ENCODE measurements at regions of chr1 and their contacts with region 1.

Region 1: GRCh38 chr1:15430787-15431570 is 7.3 kb upstream of the CTRC start:
- DNase-seq: peak; percentile 74
- H3K4me3 Mint-ChIP-seq: no peak overlapping the region
- H3K27ac Mint-ChIP-seq: no peak overlapping the region
- H3K4me1 Mint-ChIP-seq: peaks cover 8% of the 10 kb centered on the region
- H3K27me3 Mint-ChIP-seq: no peaks in the 10 kb centered on the region

Region 2: DNA sequence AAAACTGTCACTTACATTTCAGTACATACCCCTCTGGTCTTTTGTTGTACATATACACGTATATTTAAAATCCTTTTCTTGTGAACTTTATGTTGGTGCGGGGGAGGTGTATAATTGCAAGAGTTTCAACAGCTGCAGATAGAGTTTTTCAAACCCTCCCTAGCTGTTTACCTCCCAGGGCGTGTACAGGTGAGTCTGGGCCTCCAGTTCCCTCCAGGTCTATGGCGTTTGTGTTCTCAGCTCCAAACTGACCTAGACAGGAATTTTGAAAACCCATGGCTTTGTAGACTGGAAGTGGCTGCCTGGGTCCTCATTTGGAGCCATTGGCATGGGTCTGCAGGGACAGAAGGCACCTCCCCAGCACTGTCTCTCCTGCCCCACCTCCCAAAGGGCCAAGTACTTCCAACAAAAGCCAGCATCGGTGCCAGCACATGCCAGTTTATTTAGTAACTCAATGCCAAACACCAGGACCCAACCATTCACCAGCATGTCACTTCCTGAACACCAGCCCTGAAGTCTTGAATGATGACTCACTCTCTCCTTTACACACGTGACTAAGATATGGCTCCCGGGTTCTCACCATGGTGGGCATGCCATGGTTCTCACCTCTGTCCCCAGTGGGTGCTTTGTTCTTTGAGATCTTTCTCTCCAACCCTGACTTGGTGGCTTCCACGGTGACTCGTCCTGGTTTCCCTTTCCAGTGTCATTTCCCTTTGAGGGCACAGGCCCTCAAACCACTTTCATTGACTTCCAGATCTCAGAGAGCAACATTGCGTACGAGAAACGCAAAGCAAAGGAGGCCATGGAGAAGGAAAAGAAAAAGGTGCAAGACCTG is 78.6 kb before region 1 on chr1:
- CTCF ChIA-PET with region 1: no interaction called
- POLR2A ChIA-PET with region 1: no interaction called
- DNase-seq: peak; percentile 46
- H3K4me3 Mint-ChIP-seq: no peak overlapping the region
- H3K27ac Mint-ChIP-seq: peak overlapping the region; percentile 62
- H3K4me1 Mint-ChIP-seq: peaks cover 64% of the 10 kb centered on the region
- H3K27me3 Mint-ChIP-seq: peaks cover 5% of the 10 kb centered on the region

Region 3: GRCh38 chr1:15409388-15410222 is 21.4 kb before region 1 on chr1 and contains the start of gene EFHD2:
- CTCF ChIA-PET with region 1: interaction called, 6 read pairs
- POLR2A ChIA-PET with region 1: interaction called, 14 read pairs
- DNase-seq: peak; percentile 86
- H3K4me3 Mint-ChIP-seq: peak within 1 kb of the TSS; percentile 97
- H3K27ac Mint-ChIP-seq: peak within 1 kb of the TSS; percentile 89
- H3K4me1 Mint-ChIP-seq: peaks cover 51% of the 10 kb centered on the region
- H3K27me3 Mint-ChIP-seq: peaks cover 36% of the 10 kb centered on the region
- total RNA-seq, gene EFHD2: 97.7 to 99.7 TPM

Region 4: GRCh38 chr1:15531682-15532081 is 100.7 kb after region 1 on chr1:
- CTCF ChIA-PET with region 1: no interaction called
- POLR2A ChIA-PET with region 1: no interaction called
- DNase-seq: no peak
- H3K4me3 Mint-ChIP-seq: no peak overlapping the region
- H3K27ac Mint-ChIP-seq: no peak overlapping the region
- H3K4me1 Mint-ChIP-seq: peaks cover 33% of the 10 kb centered on the region
- H3K27me3 Mint-ChIP-seq: no peaks in the 10 kb centered on the region